ENCODE measurements at regions of chr4 and their contacts with region 1.

Region 1: GRCh38 chr4:7642741-7643458 is 208.2 kb upstream of the PSAPL1 start:
- DNase-seq: no peak
- ATAC-seq: no peak
- H3K4me3 ChIP-seq: no peak overlapping the region
- H3K27ac ChIP-seq: no peak overlapping the region
- H3K4me1 ChIP-seq: no peaks in the 10 kb centered on the region
- H3K27me3 ChIP-seq: no peaks in the 10 kb centered on the region

Region 2: GRCh38 chr4:7569810-7570773 is 72.8 kb before region 1 on chr4:
- intact Hi-C with region 1: no loop called
- DNase-seq: no peak
- ATAC-seq: no peak
- H3K4me3 ChIP-seq: no peak overlapping the region
- H3K27ac ChIP-seq: no peak overlapping the region
- H3K4me1 ChIP-seq: no peaks in the 10 kb centered on the region
- H3K27me3 ChIP-seq: no peaks in the 10 kb centered on the region

Region 3: GRCh38 chr4:7708981-7709380 is 66.1 kb after region 1 on chr4:
- intact Hi-C with region 1: loop called in 1 of 2 experiments (anchors 2 kb)
- DNase-seq: no peak
- ATAC-seq: no peak
- H3K4me3 ChIP-seq: no peak overlapping the region
- H3K27ac ChIP-seq: no peak overlapping the region
- H3K4me1 ChIP-seq: no peaks in the 10 kb centered on the region
- H3K27me3 ChIP-seq: no peaks in the 10 kb centered on the region

Region 4: DNA sequence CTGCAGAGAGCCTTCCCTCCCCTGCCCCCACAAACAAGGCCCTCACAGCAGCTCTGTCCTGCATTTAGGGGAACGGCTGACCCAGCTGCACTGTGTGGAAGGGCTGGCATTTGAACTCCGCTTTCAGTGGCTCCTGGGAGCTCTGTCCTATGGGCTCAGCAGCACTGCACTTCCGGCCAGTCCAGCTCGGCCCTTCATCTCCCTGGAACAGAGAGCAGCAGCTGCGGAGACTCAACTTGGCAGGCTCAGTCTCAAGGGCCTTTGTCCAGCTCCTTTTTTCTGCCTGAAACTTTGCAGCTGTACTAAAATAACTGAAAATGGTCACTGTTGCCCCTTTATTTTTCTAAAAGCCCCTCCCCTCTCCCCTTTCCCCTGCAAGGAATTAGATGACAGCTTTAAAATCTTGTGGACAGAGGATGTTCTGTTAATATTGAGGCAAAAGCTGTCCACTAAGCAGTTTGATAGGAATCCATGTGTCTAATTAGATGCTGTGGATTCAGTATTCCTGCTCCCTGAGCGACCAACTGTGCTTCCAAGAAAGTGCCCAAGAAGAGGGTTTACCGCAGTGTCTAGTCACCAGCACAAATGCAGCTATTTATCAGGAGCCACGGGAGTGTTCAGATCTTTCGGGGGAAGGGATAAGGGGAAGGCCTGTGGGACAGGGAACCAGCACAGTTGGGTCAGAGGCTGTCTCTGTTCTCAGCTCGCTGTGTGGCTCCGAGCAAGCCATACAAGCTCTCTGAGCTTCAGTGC is 163.6 kb after region 1 on chr4:
- intact Hi-C with region 1: no loop called
- DNase-seq: peak; percentile 84 to 87
- ATAC-seq: peak; percentile 75
- H3K4me3 ChIP-seq: no peak overlapping the region
- H3K27ac ChIP-seq: peak overlapping the region; percentile 31 to 74
- H3K4me1 ChIP-seq: peaks cover 3 to 5% of the 10 kb centered on the region in 2 donors
- H3K27me3 ChIP-seq: no peaks in the 10 kb centered on the region